ENCODE measurements at regions of chr18 and their contacts with region 1.

Region 1: GRCh38 chr18:35580701-35581539 is 620 bp upstream of the GALNT1 start:
- DNase-seq: no peak
- ATAC-seq: peak; percentile 58
- H3K4me3 ChIP-seq: peak overlapping the region; percentile 85
- H3K27ac ChIP-seq: peak overlapping the region; percentile 69
- H3K4me1 ChIP-seq: peaks cover 20% of the 10 kb centered on the region
- H3K27me3 ChIP-seq: no peaks in the 10 kb centered on the region
- CTCF ChIP-seq: no peak
- EP300 ChIP-seq: no peak
- POLR2A ChIP-seq: peak; percentile 75
- RAD21 ChIP-seq: no peak

Region 2: GRCh38 chr18:35407871-35408481 is 172.9 kb before region 1 on chr18:
- CTCF ChIA-PET with region 1: interaction called, 4 read pairs
- POLR2A ChIA-PET with region 1: no interaction called
- RAD21 ChIA-PET with region 1: interaction called, 3 read pairs
- SMC1A ChIA-PET with region 1: interaction called, 4 read pairs
- in situ Hi-C with region 1: loop called (anchors 5 kb)
- intact Hi-C with region 1: loop called (anchors 2 kb)
- DNase-seq: no peak
- ATAC-seq: peak; percentile 78
- H3K4me3 ChIP-seq: no peak overlapping the region
- H3K27ac ChIP-seq: no peak overlapping the region
- H3K4me1 ChIP-seq: peaks cover 21% of the 10 kb centered on the region
- H3K27me3 ChIP-seq: no peaks in the 10 kb centered on the region
- CTCF ChIP-seq: peak; percentile 67 to 85 (median 76)
- EP300 ChIP-seq: no peak
- POLR2A ChIP-seq: no peak
- RAD21 ChIP-seq: peak; percentile 93

Region 3: GRCh38 chr18:35513181-35513936 is 67.6 kb before region 1 on chr18:
- CTCF ChIA-PET with region 1: no interaction called
- POLR2A ChIA-PET with region 1: no interaction called
- RAD21 ChIA-PET with region 1: interaction called, 4 read pairs
- SMC1A ChIA-PET with region 1: interaction called, 8 read pairs
- in situ Hi-C with region 1: no loop called
- intact Hi-C with region 1: loop called (anchors 5 kb)
- DNase-seq: no peak
- ATAC-seq: no peak
- H3K4me3 ChIP-seq: no peak overlapping the region
- H3K27ac ChIP-seq: no peak overlapping the region
- H3K4me1 ChIP-seq: peaks cover 8% of the 10 kb centered on the region
- H3K27me3 ChIP-seq: no peaks in the 10 kb centered on the region
- CTCF ChIP-seq: no peak
- EP300 ChIP-seq: no peak
- POLR2A ChIP-seq: no peak
- RAD21 ChIP-seq: no peak

Region 4: GRCh38 chr18:35611518-35611917 is 30.6 kb after region 1 on chr18:
- CTCF ChIA-PET with region 1: interaction called, 3 read pairs
- POLR2A ChIA-PET with region 1: no interaction called
- RAD21 ChIA-PET with region 1: no interaction called
- SMC1A ChIA-PET with region 1: interaction called, 12 read pairs
- in situ Hi-C with region 1: no loop called
- intact Hi-C with region 1: loop called (anchors 2 kb)
- DNase-seq: no peak
- ATAC-seq: no peak
- H3K4me3 ChIP-seq: no peak overlapping the region
- H3K27ac ChIP-seq: no peak overlapping the region
- H3K4me1 ChIP-seq: peaks cover 5% of the 10 kb centered on the region
- H3K27me3 ChIP-seq: no peaks in the 10 kb centered on the region
- CTCF ChIP-seq: no peak
- EP300 ChIP-seq: no peak
- POLR2A ChIP-seq: no peak
- RAD21 ChIP-seq: no peak

Region 5: GRCh38 chr18:35661483-35662146 is 80.7 kb after region 1 on chr18:
- CTCF ChIA-PET with region 1: interaction called, 3 read pairs
- POLR2A ChIA-PET with region 1: no interaction called
- RAD21 ChIA-PET with region 1: no interaction called
- SMC1A ChIA-PET with region 1: interaction called, 6 read pairs
- in situ Hi-C with region 1: no loop called
- intact Hi-C with region 1: loop called (anchors 10 kb)
- DNase-seq: no peak
- ATAC-seq: peak; percentile 71
- H3K4me3 ChIP-seq: no peak overlapping the region
- H3K27ac ChIP-seq: peak overlapping the region; percentile 28; the same call in 1 of the 2 replicates
- H3K4me1 ChIP-seq: peaks cover 7% of the 10 kb centered on the region; the same call in 1 of the 2 replicates
- H3K27me3 ChIP-seq: no peaks in the 10 kb centered on the region
- CTCF ChIP-seq: peak in 1 of 3 experiments; percentile 30; a peak in 1 of 6 replicates
- EP300 ChIP-seq: no peak
- POLR2A ChIP-seq: no peak
- RAD21 ChIP-seq: 0 out of 2 replicates have a peak, but pooled peaks have one; percentile 33

Region 6: DNA sequence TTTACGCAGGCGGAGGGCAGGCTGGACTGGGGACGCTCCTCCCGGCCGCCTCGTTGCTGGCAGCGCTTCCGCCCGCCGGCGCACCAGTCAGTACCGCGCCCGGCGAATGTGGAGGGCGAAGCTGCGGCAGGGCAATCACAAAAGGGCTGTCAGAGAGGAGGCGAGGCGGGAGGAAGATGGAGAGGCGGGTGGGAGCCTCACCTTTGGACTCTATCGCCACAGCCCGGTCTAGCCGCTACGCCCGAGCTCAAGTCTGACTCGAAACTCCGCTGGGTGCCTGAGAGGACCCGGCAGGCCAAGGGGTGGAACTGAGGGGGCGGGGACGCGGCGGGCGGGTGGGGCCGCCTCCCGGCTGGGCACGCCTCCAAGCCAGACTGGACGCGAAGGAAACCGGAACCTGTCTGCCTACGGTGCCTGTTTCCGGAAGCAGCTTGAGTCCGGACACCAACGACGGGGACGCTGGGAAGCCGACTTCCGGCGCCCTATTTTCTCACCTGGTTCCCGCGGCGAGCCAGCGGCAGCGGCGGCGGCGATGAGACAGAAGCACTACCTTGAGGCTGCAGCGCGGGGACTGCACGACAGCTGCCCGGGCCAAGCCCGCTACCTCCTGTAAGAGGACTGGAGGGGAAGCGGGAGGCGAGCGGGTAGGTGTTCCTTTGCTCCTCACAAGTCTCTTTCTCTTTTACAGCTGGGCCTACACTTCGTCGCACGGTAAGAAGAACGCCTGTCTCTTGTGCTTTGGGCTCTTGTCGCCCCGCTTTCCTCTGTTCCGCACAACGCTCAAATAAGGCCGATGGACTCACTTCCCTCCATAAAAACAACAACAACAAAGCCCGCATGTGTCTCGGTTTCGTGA is 391.5 kb after region 1 on chr18 and contains the start of gene RMP24:
- CTCF ChIA-PET with region 1: no interaction called
- POLR2A ChIA-PET with region 1: no interaction called
- RAD21 ChIA-PET with region 1: no interaction called
- SMC1A ChIA-PET with region 1: no interaction called
- in situ Hi-C with region 1: loop called (anchors 10 kb)
- intact Hi-C with region 1: loop called (anchors 5 kb)
- DNase-seq: peak; percentile 84
- ATAC-seq: peak; percentile 95
- H3K4me3 ChIP-seq: peak within 1 kb of the TSS; percentile 94
- H3K27ac ChIP-seq: peak within 1 kb of the TSS; percentile 69
- H3K4me1 ChIP-seq: peaks cover 21% of the 10 kb centered on the region
- H3K27me3 ChIP-seq: no peaks in the 10 kb centered on the region
- CTCF ChIP-seq: no peak
- EP300 ChIP-seq: peak in 1 of 2 experiments; percentile 44; a peak in 1 of 4 replicates
- POLR2A ChIP-seq: peak; percentile 97
- RAD21 ChIP-seq: no peak

Region 7: DNA sequence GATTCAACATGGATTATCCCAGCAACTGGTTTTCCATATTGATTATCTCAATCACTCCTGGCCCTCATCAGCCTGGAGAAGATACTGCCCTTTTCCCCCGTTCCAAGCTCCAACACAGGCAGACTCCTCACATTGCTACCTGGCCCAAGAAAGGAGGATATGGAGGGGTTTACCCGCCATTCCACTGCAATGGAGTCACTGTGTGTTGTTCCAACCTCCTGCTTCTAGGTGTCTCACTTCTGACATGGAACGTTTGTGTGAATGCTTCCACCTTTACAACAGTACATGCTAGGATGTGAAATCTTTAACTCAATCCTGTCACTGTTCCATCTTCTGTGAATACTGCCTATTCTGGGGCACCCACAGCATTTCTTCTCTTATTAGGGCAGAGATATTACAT is 428.3 kb after region 1 on chr18:
- CTCF ChIA-PET with region 1: no interaction called
- POLR2A ChIA-PET with region 1: no interaction called
- RAD21 ChIA-PET with region 1: no interaction called
- SMC1A ChIA-PET with region 1: no interaction called
- in situ Hi-C with region 1: no loop called
- intact Hi-C with region 1: no loop called
- DNase-seq: no peak
- ATAC-seq: no peak
- H3K4me3 ChIP-seq: no peak overlapping the region
- H3K27ac ChIP-seq: no peak overlapping the region
- H3K4me1 ChIP-seq: no peaks in the 10 kb centered on the region
- H3K27me3 ChIP-seq: no peaks in the 10 kb centered on the region
- CTCF ChIP-seq: no peak
- EP300 ChIP-seq: no peak
- POLR2A ChIP-seq: no peak
- RAD21 ChIP-seq: no peak

Region 8: DNA sequence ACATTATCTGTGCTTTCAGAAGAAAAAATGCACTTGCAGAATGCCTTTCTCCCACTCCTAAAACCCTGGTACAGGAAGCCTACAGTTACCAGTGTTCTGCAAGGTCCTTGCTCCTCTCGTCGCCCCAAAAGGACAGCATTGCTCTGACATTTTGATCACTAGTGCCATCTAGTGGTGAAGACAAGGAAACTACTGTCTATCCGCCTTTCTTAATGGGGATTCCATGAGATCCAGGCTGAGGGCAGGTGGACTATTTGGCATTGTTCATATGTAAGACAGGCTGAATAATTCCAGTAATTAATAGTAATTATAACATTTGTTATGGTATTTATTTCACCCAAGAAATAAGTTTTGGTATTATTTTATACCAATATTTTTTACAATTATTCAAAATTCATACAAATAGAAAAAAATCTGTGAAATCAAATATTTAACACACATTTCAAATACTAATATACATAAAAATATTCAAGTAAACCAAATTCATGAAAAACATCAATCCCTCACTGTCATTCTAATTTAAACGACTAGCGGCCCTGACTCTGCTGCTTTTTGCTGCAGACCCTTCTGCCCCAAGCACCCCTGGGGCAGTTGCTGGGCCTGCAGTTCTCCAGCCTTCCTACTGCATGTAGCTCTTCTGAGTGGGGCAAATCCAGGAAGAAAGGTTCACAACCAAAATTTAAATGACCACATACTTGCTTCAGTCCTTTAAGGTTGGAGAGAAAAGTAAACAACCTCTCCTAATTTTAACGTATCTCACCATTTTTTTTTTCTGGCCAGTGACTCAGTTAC is 1228.9 kb after region 1 on chr18:
- CTCF ChIA-PET with region 1: no interaction called
- POLR2A ChIA-PET with region 1: no interaction called
- RAD21 ChIA-PET with region 1: no interaction called
- SMC1A ChIA-PET with region 1: no interaction called
- in situ Hi-C with region 1: loop called (anchors 25 kb)
- intact Hi-C with region 1: no loop called
- DNase-seq: peak; percentile 27
- ATAC-seq: peak; percentile 99
- H3K4me3 ChIP-seq: no peak overlapping the region
- H3K27ac ChIP-seq: no peak overlapping the region
- H3K4me1 ChIP-seq: no peaks in the 10 kb centered on the region
- H3K27me3 ChIP-seq: no peaks in the 10 kb centered on the region
- CTCF ChIP-seq: peak; percentile 75 to 86 (median 80)
- EP300 ChIP-seq: no peak
- POLR2A ChIP-seq: no peak
- RAD21 ChIP-seq: peak; percentile 78